ENCODE measurements at regions of chr15 and their contacts with region 1.

Region 1: DNA sequence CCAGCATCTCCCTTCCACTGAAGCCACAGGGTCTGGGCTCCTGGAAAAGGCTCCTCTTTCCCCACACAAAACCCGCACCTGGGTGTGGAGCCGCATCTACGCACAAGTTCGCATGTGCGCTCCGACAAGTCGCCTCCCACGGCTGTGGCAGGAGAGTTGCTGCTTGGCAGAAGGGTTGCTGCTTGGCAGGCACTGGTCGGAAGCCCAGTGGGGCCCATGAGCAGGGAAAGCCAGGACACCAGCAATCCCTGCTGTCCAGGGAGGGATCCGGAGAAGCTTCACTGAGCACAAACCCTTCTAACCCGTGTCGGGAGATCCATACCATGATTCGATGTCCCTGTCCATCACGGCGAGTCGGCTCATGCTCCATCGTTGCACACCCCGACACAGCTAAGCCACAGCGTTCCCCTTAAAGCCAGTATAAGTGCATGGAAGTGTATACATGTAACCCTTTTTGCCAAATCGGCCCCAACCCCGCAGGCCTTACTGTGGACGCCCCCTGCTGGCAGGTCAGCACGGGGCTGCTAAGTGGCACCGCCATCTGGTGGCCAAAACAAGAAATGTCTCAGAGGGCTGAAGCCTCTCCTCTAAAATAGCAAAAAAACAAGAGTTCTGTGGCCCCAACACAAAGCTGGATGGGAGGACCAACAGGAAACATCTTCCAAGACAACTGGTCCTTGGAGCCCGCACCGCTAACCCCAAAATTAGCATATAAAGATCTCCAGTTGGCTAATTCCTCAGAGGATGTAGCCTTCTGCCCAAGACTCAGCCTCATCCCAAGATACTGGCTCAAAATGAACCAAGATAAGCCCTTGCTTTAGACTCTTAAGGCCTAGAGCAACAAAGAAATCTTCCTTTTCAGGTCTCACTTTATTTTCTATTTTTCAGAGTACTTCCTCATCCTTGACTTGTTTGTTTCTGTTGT is 8.3 kb downstream of the ANKRD63 start:
- DNase-seq: peak; percentile 92
- ATAC-seq: peak; percentile 85
- H3K4me3 ChIP-seq: no peak overlapping the region
- H3K4me3 Mint-ChIP-seq: no peak overlapping the region
- H3K27ac ChIP-seq: no peak overlapping the region
- H3K27ac Mint-ChIP-seq: peak overlapping the region; percentile 68
- H3K4me1 ChIP-seq: peaks cover 6 to 18% of the 10 kb centered on the region in 2 donors
- H3K4me1 Mint-ChIP-seq: peaks cover 22% of the 10 kb centered on the region
- H3K27me3 ChIP-seq: peaks cover 0 to 28% (median 9%) of the 10 kb centered on the region in 4 experiments
- H3K27me3 Mint-ChIP-seq: peaks cover 18% of the 10 kb centered on the region
- CTCF ChIP-seq: peak; percentile 100

Region 2: DNA sequence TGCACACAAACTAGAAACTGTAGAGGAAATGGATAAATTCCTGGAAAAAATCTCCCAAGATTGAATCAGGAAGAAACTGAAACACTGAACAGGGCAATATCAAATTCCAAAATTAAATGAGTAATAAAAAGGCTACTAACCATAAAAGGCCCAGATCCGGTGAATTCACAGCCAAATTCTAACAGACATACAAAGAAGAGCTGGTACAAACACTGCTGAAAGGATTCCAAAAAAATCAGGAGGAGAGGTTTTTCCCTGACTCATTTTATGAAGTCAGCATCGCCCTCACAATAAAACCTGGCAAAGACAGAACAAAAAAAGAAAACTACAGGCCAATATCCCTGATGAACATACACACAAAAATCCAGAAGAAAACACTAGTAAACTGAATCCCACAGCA is 1156.1 kb before region 1 on chr15:
- CTCF ChIA-PET with region 1: no interaction called
- POLR2A ChIA-PET with region 1: no interaction called
- intact Hi-C with region 1: no loop called
- DNase-seq: no peak
- ATAC-seq: no peak
- H3K4me3 ChIP-seq: no peak overlapping the region
- H3K4me3 Mint-ChIP-seq: no peak overlapping the region
- H3K27ac ChIP-seq: no peak overlapping the region
- H3K27ac Mint-ChIP-seq: no peak overlapping the region
- H3K4me1 ChIP-seq: no peaks in the 10 kb centered on the region
- H3K4me1 Mint-ChIP-seq: no peaks in the 10 kb centered on the region
- H3K27me3 ChIP-seq: no peaks in the 10 kb centered on the region
- H3K27me3 Mint-ChIP-seq: peaks cover 4% of the 10 kb centered on the region
- CTCF ChIP-seq: no peak

Region 3: GRCh38 chr15:40044717-40045571 is 229.7 kb before region 1 on chr15:
- CTCF ChIA-PET with region 1: interaction called, 316 read pairs
- POLR2A ChIA-PET with region 1: interaction called, 3 read pairs
- intact Hi-C with region 1: loop called (anchors 1 kb)
- DNase-seq: peak; percentile 90
- ATAC-seq: peak; percentile 94
- H3K4me3 ChIP-seq: peak overlapping the region in 2 of 5 experiments; percentile 26 to 34
- H3K4me3 Mint-ChIP-seq: peak overlapping the region; percentile 52
- H3K27ac ChIP-seq: peak overlapping the region; percentile 65 to 69
- H3K27ac Mint-ChIP-seq: peak overlapping the region; percentile 86
- H3K4me1 ChIP-seq: peaks cover 57 to 64% of the 10 kb centered on the region in 2 donors
- H3K4me1 Mint-ChIP-seq: peaks cover 62% of the 10 kb centered on the region
- H3K27me3 ChIP-seq: no peaks in the 10 kb centered on the region
- H3K27me3 Mint-ChIP-seq: no peaks in the 10 kb centered on the region
- CTCF ChIP-seq: peak; percentile 97

Region 4: GRCh38 chr15:40115670-40116093 is 158.9 kb before region 1 on chr15:
- CTCF ChIA-PET with region 1: interaction called, 13 read pairs
- POLR2A ChIA-PET with region 1: no interaction called
- intact Hi-C with region 1: no loop called
- DNase-seq: peak; percentile 88
- ATAC-seq: peak; percentile 92
- H3K4me3 ChIP-seq: no peak overlapping the region
- H3K4me3 Mint-ChIP-seq: peak overlapping the region; percentile 69
- H3K27ac ChIP-seq: peak overlapping the region; percentile 75 to 82
- H3K27ac Mint-ChIP-seq: peak overlapping the region; percentile 99
- H3K4me1 ChIP-seq: peaks cover 22 to 25% of the 10 kb centered on the region in 2 donors
- H3K4me1 Mint-ChIP-seq: peaks cover 31% of the 10 kb centered on the region
- H3K27me3 ChIP-seq: no peaks in the 10 kb centered on the region
- H3K27me3 Mint-ChIP-seq: no peaks in the 10 kb centered on the region
- CTCF ChIP-seq: no peak

Region 5: GRCh38 chr15:40217159-40217824 is 57.3 kb before region 1 on chr15:
- CTCF ChIA-PET with region 1: interaction called, 350 read pairs
- POLR2A ChIA-PET with region 1: interaction called, 4 read pairs
- intact Hi-C with region 1: loop called (anchors 1 kb)
- DNase-seq: peak; percentile 85
- ATAC-seq: peak; percentile 96
- H3K4me3 ChIP-seq: no peak overlapping the region
- H3K4me3 Mint-ChIP-seq: no peak overlapping the region
- H3K27ac ChIP-seq: no peak overlapping the region
- H3K27ac Mint-ChIP-seq: no peak overlapping the region
- H3K4me1 ChIP-seq: no peaks in the 10 kb centered on the region
- H3K4me1 Mint-ChIP-seq: no peaks in the 10 kb centered on the region
- H3K27me3 ChIP-seq: no peaks in the 10 kb centered on the region
- H3K27me3 Mint-ChIP-seq: no peaks in the 10 kb centered on the region
- CTCF ChIP-seq: peak; percentile 95

Region 6: GRCh38 chr15:40290918-40291574 is 16.4 kb after region 1 on chr15:
- CTCF ChIA-PET with region 1: interaction called, 21 read pairs
- POLR2A ChIA-PET with region 1: no interaction called
- intact Hi-C with region 1: no loop called
- DNase-seq: no peak
- ATAC-seq: no peak
- H3K4me3 ChIP-seq: no peak overlapping the region
- H3K4me3 Mint-ChIP-seq: no peak overlapping the region
- H3K27ac ChIP-seq: no peak overlapping the region
- H3K27ac Mint-ChIP-seq: no peak overlapping the region
- H3K4me1 ChIP-seq: no peaks in the 10 kb centered on the region
- H3K4me1 Mint-ChIP-seq: peaks cover 2% of the 10 kb centered on the region
- H3K27me3 ChIP-seq: no peaks in the 10 kb centered on the region
- H3K27me3 Mint-ChIP-seq: no peaks in the 10 kb centered on the region
- CTCF ChIP-seq: no peak

Region 7: GRCh38 chr15:40323239-40323952 is 48.8 kb after region 1 on chr15 and contains the start of gene INAFM2:
- CTCF ChIA-PET with region 1: interaction called, 43 read pairs
- POLR2A ChIA-PET with region 1: no interaction called
- intact Hi-C with region 1: no loop called
- DNase-seq: peak; percentile 97
- ATAC-seq: peak; percentile 89
- H3K4me3 ChIP-seq: peak within 1 kb of the TSS; percentile 25 to 71 (median 59)
- H3K4me3 Mint-ChIP-seq: peak within 1 kb of the TSS; percentile 85
- H3K27ac ChIP-seq: peak within 1 kb of the TSS in 1 of 2 donors; percentile 10
- H3K27ac Mint-ChIP-seq: no peak within 1 kb of the TSS
- H3K4me1 ChIP-seq: peaks cover 21 to 26% of the 10 kb centered on the region in 2 donors
- H3K4me1 Mint-ChIP-seq: peaks cover 29% of the 10 kb centered on the region
- H3K27me3 ChIP-seq: peaks cover 0 to 2% (median 0%) of the 10 kb centered on the region in 4 experiments
- H3K27me3 Mint-ChIP-seq: no peaks in the 10 kb centered on the region
- CTCF ChIP-seq: peak; percentile 75
- total RNA-seq, gene INAFM2: 5.3 and 7.0 TPM in 2 replicates

Region 8: GRCh38 chr15:40421246-40422157 is 146.9 kb after region 1 on chr15:
- CTCF ChIA-PET with region 1: interaction called, 35 read pairs
- POLR2A ChIA-PET with region 1: no interaction called
- intact Hi-C with region 1: loop called (anchors 1 kb)
- DNase-seq: peak; percentile 83
- ATAC-seq: peak; percentile 96
- H3K4me3 ChIP-seq: no peak overlapping the region
- H3K4me3 Mint-ChIP-seq: no peak overlapping the region
- H3K27ac ChIP-seq: no peak overlapping the region
- H3K27ac Mint-ChIP-seq: no peak overlapping the region
- H3K4me1 ChIP-seq: peaks cover 4 to 7% of the 10 kb centered on the region in 2 donors
- H3K4me1 Mint-ChIP-seq: peaks cover 2% of the 10 kb centered on the region
- H3K27me3 ChIP-seq: no peaks in the 10 kb centered on the region
- H3K27me3 Mint-ChIP-seq: no peaks in the 10 kb centered on the region
- CTCF ChIP-seq: peak; percentile 97